Right ventricle myocardium inferior (tissue), 1 donor: ENCODE measurements at regions of chr12 and their contacts with region 1.

Region 1: GRCh38 chr12:20369305-20370005 is 1.1 kb downstream of the PDE3A start:
- DNase-seq: peak; percentile 89
- ATAC-seq: peak; percentile 86

Region 2: DNA sequence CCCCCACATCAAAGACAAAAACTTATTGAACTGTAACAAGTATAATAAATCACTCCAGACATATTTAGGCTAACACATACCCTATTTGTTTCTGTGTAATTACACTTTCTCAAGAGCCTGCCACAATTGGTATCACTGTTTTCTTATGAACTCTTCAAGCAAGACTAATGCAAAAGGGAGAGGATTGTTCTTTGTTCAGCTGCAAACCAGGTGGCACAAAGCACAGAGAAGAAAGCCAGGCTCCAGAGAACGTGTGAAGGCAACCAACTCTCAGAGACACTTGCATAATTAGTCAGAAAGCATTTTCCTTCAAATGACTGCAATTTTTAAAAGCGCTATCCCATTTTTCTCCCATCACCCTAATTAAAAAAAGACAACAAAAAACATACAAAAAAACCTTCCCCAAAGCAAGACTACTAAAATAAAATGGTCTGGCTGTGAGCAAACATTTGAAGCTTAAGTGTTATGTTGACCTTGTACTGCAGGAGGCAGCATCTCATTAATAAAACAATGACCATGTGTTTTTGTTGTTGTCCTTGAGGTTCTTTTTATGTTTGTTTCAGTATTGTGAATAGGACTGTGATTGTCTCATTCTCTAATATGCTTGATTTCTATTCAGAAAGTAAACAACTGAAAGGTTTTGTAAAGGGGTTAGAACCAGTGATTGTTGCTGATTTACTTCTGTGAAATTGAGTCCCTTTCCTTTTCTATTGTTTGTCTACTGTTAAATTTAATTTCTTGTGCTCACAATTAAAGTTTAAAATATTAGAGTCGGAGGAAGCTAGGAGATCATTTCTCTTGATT is 453.9 kb before region 1 on chr12:
- intact Hi-C with region 1: loop called (anchors 5 kb)
- DNase-seq: no peak
- ATAC-seq: peak; percentile 70

Region 3: GRCh38 chr12:19994970-19995369 is 374.5 kb before region 1 on chr12:
- intact Hi-C with region 1: loop called (anchors 5 kb)
- DNase-seq: no peak
- ATAC-seq: no peak

Region 4: DNA sequence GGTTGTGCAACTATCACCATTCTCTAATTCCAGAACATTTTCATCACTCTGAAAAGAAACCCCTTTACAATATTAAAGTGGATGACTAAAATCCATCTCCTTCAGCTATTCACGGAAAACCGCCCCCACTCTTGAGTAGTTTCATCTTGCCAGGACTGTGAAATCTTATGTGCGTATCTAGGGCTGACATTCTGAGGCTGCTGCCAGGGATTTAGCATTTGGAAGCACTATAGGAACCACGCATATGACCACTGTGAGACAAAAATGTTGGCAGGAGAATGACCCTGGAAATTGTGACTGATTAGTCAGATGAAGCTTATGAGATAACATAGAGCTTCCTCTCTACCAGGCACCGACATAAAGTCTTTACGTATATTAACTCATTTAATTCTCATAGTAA is 306.3 kb before region 1 on chr12:
- intact Hi-C with region 1: no loop called
- DNase-seq: no peak
- ATAC-seq: no peak

Region 5: DNA sequence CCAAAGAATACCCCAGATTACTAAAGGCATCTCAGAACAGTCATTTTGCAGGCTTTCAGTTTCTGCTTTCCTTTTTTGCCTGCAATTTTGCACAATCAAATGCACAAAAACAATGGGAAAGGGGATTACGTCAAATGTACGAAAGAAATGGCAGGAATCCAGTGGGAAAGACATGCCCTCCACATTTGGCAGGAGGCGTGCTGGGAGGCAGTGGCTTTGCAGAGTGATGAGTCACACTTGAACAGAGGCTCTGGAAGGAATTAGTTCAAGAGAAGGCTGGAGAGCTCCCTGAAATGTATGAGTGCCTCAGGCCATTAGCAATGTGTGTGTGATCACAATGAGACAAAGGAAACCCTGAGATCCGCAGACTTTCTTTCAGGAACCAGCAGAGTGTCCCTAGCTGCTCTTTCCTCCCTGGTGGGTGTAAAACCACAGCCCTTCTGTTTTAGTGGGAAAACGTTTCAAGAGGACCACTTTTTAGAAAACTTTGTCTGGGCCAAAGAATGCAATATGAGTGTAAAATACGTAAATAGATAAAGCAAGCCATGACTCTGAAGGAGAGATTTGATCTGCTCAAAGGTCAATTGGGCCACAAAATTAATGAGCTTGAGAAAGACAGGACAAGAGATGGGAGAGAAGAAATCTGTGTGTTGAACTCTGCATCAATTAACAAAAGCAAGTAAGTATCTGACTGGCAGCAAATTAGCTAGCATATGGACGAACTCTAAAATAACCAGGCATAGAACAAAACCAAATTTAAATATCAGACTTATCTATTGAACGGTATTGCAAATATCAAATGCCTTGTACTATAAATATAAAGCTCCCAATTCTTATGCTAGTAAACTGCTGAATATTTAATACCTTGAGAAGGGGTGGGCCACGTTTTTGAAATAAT is 156.5 kb before region 1 on chr12:
- intact Hi-C with region 1: loop called (anchors 5 kb)
- DNase-seq: peak; percentile 85
- ATAC-seq: peak; percentile 98

Region 6: DNA sequence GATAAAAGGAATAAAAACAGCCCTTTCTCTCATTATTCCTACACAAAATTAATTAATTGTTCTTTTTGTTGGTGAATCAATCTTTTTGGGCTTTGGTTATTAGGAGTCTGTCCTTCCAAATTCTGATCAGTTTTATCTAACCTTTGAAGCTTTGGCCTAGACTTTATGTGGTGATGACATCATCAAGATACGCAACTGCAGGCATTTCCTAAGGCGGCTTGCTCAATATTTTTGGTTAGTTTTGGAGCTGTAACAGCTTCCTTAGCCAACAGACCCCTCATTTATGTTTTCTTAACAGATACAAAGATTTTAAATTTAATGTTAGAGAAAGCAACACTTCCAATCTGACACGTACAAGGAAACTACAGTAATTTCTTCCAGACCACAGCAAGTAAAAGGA is 88.9 kb before region 1 on chr12:
- intact Hi-C with region 1: no loop called
- DNase-seq: no peak
- ATAC-seq: no peak

Region 7: DNA sequence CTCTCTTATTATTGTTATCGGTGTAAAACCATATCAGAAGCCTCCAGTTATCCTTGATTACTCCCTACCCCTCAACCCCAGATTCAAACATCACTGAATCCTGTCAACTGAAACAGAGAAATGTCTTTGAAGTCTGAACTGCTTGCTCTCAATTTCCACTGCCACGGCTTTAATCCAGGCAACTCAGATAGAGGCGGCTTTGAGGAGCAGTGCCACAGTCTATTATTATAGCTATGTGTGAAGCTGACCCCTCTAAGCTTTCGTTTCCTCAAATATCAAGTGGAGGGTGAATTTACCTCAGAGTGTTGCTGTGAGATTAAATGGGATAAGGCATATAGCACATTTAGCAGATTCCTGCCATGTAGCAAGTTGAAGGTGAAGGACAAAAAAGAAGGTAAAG is 50.1 kb before region 1 on chr12:
- intact Hi-C with region 1: loop called (anchors 2 kb)
- DNase-seq: no peak
- ATAC-seq: peak; percentile 68

Region 8: DNA sequence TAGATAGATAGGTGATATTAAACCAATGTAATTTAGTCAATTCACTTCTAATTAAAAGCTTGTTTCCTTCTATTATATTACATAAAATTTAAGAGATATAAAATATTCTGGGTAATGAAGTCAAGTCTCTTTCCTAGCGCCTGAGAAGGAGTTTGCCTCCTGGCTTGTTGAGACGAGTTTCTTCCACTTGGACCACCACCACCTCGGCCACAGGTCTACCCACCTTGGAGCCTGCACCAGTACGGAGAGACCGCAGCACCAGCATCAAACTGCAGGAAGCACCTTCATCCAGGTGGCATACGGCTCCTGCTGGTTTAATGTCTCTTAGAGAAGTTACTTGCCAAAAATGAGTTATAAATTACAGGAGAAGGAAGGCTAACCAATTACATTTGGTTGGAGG is 246.6 kb after region 1 on chr12:
- intact Hi-C with region 1: loop called (anchors 10 kb)
- DNase-seq: no peak
- ATAC-seq: no peak